K562 (cell line): ENCODE measurements at regions of chr12 and their contacts with region 1.

Region 1: DNA sequence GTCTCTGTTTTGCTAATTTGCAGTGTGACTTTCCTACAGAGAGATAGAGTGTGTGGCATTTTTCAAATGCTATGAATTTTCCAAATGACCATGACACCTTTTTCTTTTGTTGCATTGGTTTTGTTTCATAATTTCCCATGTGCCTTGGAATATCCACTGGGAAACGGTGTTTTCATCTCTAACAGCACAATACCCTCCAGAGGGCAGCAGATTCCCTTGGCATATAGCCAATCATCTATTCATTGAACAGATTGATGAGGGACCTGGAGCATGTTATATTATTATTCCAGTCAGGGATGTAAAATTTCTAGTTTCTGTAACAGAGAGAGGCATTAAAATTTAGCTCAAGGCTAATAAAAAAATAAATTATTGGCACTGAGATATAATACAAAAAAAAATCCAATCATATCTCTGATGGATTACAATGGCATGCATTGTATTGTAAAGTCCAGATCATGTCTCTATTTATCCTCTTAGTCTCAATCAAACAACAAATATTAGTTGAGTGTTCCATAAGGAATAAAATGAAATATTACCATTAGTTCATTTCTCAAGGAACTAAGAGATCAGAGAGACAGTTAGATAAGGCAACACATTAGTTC is 29.6 kb upstream of the NTN4 start:
- DNase-seq: peak; percentile 22 to 32 (median 28)
- ATAC-seq: no peak
- H3K4me3 ChIP-seq: no peak overlapping the region
- H3K27ac ChIP-seq: no peak overlapping the region
- H3K4me1 ChIP-seq: no peaks in the 10 kb centered on the region
- H3K27me3 ChIP-seq: no peaks in the 10 kb centered on the region; a peak in 3 of 5 replicates
- CTCF ChIP-seq: peak; percentile 31 to 54 (median 38); a peak in 4 of 6 replicates
- EP300 ChIP-seq: no peak
- POLR2A ChIP-seq: no peak
- RAD21 ChIP-seq: peak; percentile 40 to 57; a peak in 3 of 4 replicates

Region 2: DNA sequence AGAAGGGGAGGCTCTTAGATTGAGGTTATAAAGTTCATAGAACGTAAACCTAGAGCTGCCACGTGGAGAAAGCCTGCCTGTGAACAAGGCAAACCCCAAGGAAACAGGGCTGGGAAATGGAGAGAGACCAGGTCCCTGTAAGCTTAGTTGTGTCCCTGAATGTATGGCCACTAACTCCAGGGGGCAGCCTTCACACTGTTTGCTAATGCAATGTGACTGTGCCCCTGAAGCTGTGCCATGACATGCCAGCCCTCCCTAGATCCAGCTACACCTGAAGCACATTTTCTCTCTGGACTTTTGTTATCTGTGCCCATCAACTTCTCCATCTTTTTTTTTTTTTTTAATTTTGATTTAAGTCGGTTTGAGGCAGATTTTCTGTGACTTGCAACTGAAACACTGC is 1109.3 kb before region 1 on chr12:
- CTCF ChIA-PET with region 1: no interaction called
- POLR2A ChIA-PET with region 1: no interaction called
- in situ Hi-C with region 1: no loop called
- intact Hi-C with region 1: no loop called
- DNase-seq: peak in 3 of 4 experiments; percentile 10 to 27 (median 25)
- ATAC-seq: peak; percentile 81
- H3K4me3 ChIP-seq: no peak overlapping the region
- H3K27ac ChIP-seq: no peak overlapping the region
- H3K4me1 ChIP-seq: no peaks in the 10 kb centered on the region
- H3K27me3 ChIP-seq: peaks cover 2 to 8% of the 10 kb centered on the region in 2 experiments; a peak in 3 of 5 replicates
- CTCF ChIP-seq: peak; percentile 46 to 60 (median 60)
- EP300 ChIP-seq: no peak
- POLR2A ChIP-seq: no peak
- RAD21 ChIP-seq: peak in 1 of 2 experiments; percentile 49; a peak in 2 of 4 replicates

Region 3: GRCh38 chr12:95582230-95583058 is 237.8 kb before region 1 on chr12:
- CTCF ChIA-PET with region 1: interaction called, 3 read pairs
- POLR2A ChIA-PET with region 1: no interaction called
- in situ Hi-C with region 1: no loop called
- intact Hi-C with region 1: loop called (anchors 1 kb)
- DNase-seq: peak in 1 of 4 experiments; percentile 11
- ATAC-seq: peak; percentile 59
- H3K4me3 ChIP-seq: no peak overlapping the region
- H3K27ac ChIP-seq: no peak overlapping the region
- H3K4me1 ChIP-seq: no peaks in the 10 kb centered on the region; a peak in 1 of 5 replicates
- H3K27me3 ChIP-seq: no peaks in the 10 kb centered on the region; a peak in 1 of 5 replicates
- CTCF ChIP-seq: peak; percentile 22 to 66 (median 37); a peak in 4 of 6 replicates
- EP300 ChIP-seq: no peak
- POLR2A ChIP-seq: no peak
- RAD21 ChIP-seq: peak; percentile 44 to 69

Region 4: DNA sequence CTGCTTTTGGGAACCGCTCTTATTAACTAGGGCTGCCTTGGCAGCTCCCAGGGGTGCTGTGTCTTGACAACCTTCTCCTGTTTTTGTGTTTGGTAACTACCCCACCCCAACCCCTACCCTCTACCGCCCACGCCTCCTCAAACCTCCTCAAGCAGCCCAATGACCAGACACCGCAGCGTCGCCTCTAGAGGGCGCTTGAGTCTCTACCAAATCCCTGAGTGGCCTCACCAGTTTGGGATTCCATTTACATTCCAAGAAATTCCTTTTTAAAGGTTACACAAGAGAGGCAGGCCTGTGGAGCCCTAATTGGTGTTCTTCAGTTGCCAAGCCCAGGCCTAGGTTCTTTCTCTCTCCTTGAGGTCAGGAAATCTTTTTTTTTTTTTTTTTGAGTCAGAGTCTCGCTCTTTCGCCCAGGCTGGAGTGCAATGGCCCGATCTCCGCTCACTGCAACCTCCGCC is 196.6 kb before region 1 on chr12:
- CTCF ChIA-PET with region 1: no interaction called
- POLR2A ChIA-PET with region 1: no interaction called
- in situ Hi-C with region 1: loop called (anchors 10 kb)
- intact Hi-C with region 1: loop called (anchors 1 kb)
- DNase-seq: peak; percentile 60 to 68 (median 62)
- ATAC-seq: peak; percentile 98
- H3K4me3 ChIP-seq: no peak overlapping the region
- H3K27ac ChIP-seq: no peak overlapping the region
- H3K4me1 ChIP-seq: no peaks in the 10 kb centered on the region; a peak in 1 of 5 replicates
- H3K27me3 ChIP-seq: peaks cover 7 to 13% of the 10 kb centered on the region in 2 experiments; a peak in 3 of 5 replicates
- CTCF ChIP-seq: peak; percentile 73 to 81 (median 76)
- EP300 ChIP-seq: no peak
- POLR2A ChIP-seq: no peak
- RAD21 ChIP-seq: peak; percentile 34 to 68